Naive thymus-derived CD8-positive, alpha-beta T cell (primary cell): ENCODE measurements at regions of chr2 and their contacts with region 1.

Region 1: GRCh38 chr2:233267516-233268245 is 16.2 kb downstream of the ATG16L1 start:
- DNase-seq: peak; percentile 47 to 95 (median 88)
- ATAC-seq: peak; percentile 94 to 95
- H3K4me3 Mint-ChIP-seq: peak overlapping the region; percentile 53 to 87 (median 80)
- H3K27ac Mint-ChIP-seq: peak overlapping the region; percentile 96 to 100 (median 98)
- H3K4me1 Mint-ChIP-seq: peaks cover 35 to 77% (median 71%) of the 10 kb centered on the region in 4 donors
- H3K27me3 Mint-ChIP-seq: no peaks in the 10 kb centered on the region

Region 2: GRCh38 chr2:233251306-233252116 is 16.2 kb before region 1 on chr2 and contains the start of gene ATG16L1:
- POLR2A ChIA-PET with region 1: interaction called, 110 read pairs
- DNase-seq: peak; percentile 83 to 96 (median 95)
- ATAC-seq: peak; percentile 92 to 96
- H3K4me3 Mint-ChIP-seq: peak within 1 kb of the TSS; percentile 87 to 96 (median 92)
- H3K27ac Mint-ChIP-seq: peak within 1 kb of the TSS; percentile 90 to 98 (median 94)
- H3K4me1 Mint-ChIP-seq: peaks cover 32 to 82% (median 70%) of the 10 kb centered on the region in 4 donors
- H3K27me3 Mint-ChIP-seq: no peaks in the 10 kb centered on the region
- polyA plus RNA-seq, gene ATG16L1: 12.4 to 19.3 (median 15.7) TPM

Region 3: GRCh38 chr2:233331536-233331935 is 63.9 kb after region 1 on chr2:
- POLR2A ChIA-PET with region 1: interaction called, 23 read pairs
- DNase-seq: peak; percentile 38 to 90 (median 80)
- ATAC-seq: peak; percentile 96
- H3K4me3 Mint-ChIP-seq: peak overlapping the region; percentile 47 to 85 (median 72)
- H3K27ac Mint-ChIP-seq: peak overlapping the region; percentile 89 to 99 (median 98)
- H3K4me1 Mint-ChIP-seq: peaks cover 29 to 76% (median 47%) of the 10 kb centered on the region in 4 donors
- H3K27me3 Mint-ChIP-seq: no peaks in the 10 kb centered on the region

Region 4: DNA sequence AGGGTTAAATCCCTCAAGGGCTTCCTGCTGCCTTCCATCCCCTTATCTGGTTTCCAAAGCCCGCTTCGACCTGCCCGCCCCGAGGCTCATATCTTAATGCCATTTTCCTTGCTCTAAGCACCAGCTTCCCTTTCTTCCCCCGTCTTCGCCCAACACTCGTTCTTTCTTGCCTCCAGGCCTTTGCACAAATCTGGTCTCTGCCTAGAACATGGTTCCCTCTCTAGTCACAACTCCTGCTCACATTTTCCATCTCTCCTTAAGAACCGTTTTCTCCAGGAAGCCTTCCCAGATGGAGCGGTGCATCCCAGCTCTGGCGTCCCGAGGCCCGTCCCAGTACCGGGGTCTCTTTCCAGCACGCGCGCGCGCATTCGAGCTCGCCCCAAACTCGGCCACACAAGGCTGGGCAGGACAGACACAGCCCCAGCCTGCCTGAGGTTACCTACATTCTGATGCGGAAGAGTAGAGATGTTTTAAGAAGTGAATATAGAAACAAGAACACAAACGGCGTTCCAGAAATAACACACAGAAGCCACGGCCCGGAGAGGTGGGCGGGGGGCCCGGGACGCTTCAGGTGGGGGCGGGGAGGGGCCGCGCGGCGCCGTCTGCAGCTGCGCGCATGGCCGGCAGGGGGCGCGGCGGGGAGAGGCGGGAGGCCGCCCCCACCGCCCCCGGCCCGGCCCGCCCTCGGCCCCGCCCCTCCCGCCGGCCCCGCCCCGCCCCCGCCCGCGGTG is 86.3 kb after region 1 on chr2 and contains the start of gene DGKD:
- POLR2A ChIA-PET with region 1: interaction called, 17 read pairs
- DNase-seq: peak; percentile 46 to 92 (median 72)
- ATAC-seq: peak; percentile 70 to 81
- H3K4me3 Mint-ChIP-seq: peak within 1 kb of the TSS; percentile 87 to 97 (median 95)
- H3K27ac Mint-ChIP-seq: peak within 1 kb of the TSS; percentile 93 to 98 (median 95)
- H3K4me1 Mint-ChIP-seq: peaks cover 35 to 83% (median 80%) of the 10 kb centered on the region in 4 donors
- H3K27me3 Mint-ChIP-seq: no peaks in the 10 kb centered on the region
- polyA plus RNA-seq, gene DGKD: 29.3 to 44.5 (median 31.6) TPM

Region 5: DNA sequence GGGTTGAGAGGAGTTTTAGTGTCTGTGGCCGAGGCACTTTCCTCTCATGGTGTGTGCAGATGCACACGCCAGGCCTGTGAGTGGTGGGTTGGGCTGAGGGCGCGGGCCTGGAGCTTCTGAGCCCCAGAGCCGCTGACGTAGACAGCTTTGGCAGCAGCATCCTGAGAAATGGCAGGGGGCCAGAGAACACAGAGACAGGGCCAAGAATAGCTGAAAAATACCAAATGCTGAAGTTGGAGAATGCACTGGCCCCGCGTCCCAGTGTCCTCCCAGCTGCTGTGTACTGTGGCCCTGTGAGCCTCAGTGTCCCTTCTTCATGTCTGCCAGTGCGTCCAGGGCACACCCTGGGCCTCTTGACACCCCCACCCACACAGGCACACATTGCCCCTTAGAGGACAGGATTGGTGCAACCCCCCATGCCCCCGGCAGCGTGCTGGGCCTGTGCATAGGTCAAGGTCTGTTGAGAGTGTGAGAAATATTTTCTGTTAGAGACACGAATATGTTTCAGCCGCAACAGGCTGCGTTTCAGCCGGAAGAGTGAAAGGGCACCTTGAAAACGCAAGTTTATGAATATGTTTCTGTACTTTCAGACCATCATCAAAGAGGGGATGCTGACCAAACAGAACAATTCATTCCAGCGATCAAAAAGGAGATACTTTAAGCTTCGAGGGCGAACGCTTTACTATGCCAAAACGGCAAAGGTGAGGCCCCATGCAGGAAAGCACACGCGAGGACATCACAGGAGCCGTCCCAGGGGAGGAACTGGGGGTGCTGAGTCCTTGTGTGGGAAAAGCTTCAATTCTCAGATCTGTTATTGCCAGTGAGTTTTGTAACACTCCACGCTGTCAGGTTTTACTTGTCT is 120.2 kb after region 1 on chr2:
- POLR2A ChIA-PET with region 1: interaction called, 16 read pairs
- DNase-seq: peak in 6 of 10 donors; percentile 26 to 77 (median 58)
- ATAC-seq: peak; percentile 55 to 64
- H3K4me3 Mint-ChIP-seq: peak overlapping the region in 9 of 10 donors; percentile 2 to 88 (median 79)
- H3K27ac Mint-ChIP-seq: peak overlapping the region; percentile 89 to 96 (median 92)
- H3K4me1 Mint-ChIP-seq: peaks cover 44 to 82% (median 72%) of the 10 kb centered on the region in 4 donors
- H3K27me3 Mint-ChIP-seq: no peaks in the 10 kb centered on the region

Region 6: GRCh38 chr2:233404222-233404621 is 136.5 kb after region 1 on chr2:
- POLR2A ChIA-PET with region 1: interaction called, 10 read pairs
- DNase-seq: peak; percentile 44 to 88 (median 70)
- ATAC-seq: peak; percentile 54 to 64
- H3K4me3 Mint-ChIP-seq: peak overlapping the region in 7 of 10 donors; percentile 30 to 76 (median 47)
- H3K27ac Mint-ChIP-seq: peak overlapping the region; percentile 53 to 94 (median 83)
- H3K4me1 Mint-ChIP-seq: peaks cover 46 to 89% (median 84%) of the 10 kb centered on the region in 4 donors
- H3K27me3 Mint-ChIP-seq: no peaks in the 10 kb centered on the region

Region 7: DNA sequence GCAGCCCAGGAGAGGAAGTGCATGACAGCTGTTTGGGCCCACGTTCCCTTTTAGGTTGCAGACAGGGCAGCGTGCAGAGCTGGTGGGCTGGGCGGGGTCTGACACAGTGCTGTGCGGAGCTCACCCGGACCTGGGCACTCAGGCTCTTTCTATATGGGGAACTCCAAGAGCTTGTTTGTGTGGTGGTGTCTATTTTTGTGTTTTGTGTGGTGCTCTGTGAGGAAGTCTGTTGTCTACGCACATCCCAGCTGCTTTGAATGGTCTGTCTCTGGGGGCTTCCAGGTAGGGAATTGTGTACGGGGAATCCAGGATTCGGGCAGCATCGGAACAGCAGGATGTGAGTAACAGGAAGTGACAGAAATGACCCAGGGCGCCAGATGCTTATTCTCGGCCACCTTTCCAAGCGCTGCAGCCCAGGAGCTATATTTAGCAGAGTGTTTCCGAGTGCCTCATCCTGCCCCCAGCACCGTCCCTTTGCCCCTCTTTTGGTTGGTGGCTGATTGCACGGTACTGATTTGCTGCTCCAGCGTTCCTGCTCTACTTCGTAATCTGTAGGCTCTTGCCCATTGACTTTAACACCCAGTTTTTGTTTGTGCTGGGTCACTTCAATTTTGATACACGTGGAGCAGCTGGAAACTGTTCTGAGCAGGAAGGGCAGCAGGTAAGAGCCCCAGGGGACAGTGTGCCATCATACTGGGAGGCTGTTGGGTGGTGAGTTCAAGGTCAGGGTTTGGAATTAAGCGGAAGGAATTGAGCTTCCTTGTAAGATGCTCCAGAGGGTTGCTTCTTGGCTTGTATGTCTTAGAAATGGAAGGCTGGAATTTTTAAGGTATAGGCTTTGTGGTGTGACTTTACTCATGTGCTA is 151.3 kb after region 1 on chr2:
- POLR2A ChIA-PET with region 1: interaction called, 19 read pairs
- DNase-seq: peak; percentile 45 to 82 (median 58)
- ATAC-seq: peak; percentile 64 to 75
- H3K4me3 Mint-ChIP-seq: peak overlapping the region; percentile 87 to 96 (median 90)
- H3K27ac Mint-ChIP-seq: peak overlapping the region; percentile 94 to 99 (median 96)
- H3K4me1 Mint-ChIP-seq: peaks cover 56 to 100% (median 98%) of the 10 kb centered on the region in 4 donors
- H3K27me3 Mint-ChIP-seq: no peaks in the 10 kb centered on the region